Ascending aorta (tissue), 2 donors: ENCODE measurements at regions of chr20 and their contacts with region 1.

Region 1: DNA sequence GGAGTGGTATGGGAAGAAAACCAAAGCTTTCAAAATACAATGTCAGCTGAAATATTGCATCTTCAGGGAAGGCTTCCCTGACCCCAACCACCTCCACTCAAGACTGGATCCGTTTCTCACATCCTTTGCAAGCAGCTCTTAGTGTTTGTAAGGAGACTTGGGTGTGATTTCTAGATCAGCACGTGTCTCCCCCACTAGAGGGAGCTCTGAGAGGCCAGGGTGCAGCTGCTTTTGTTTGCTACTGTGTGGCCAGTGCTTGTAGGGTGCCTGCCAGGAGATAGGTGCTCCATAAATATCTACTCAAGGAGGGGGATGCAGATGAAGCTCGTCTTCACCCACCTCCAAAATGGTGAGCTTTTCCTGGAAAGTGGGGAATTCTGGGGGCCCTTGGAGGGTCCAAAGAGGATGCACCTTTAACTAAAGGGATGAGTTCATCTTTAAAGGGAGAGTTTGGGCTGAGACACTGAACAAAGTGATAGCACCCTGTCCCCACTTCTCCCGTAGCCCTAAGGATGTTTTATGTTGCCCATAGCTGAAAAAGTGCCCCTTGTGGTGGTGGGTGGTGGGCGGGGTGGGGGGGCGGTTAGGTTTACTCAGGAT is 52.6 kb upstream of the MAFB start:
- DNase-seq: no peak
- H3K4me3 ChIP-seq: no peak overlapping the region
- H3K27ac ChIP-seq: no peak overlapping the region
- H3K4me1 ChIP-seq: no peaks in the 10 kb centered on the region
- H3K27me3 ChIP-seq: no peaks in the 10 kb centered on the region
- CTCF ChIP-seq: peak in 2 of 3 experiments; percentile 35 to 62

Region 2: GRCh38 chr20:40945754-40946450 is 204.3 kb after region 1 on chr20:
- intact Hi-C with region 1: loop called (anchors 1 kb)
- DNase-seq: no peak
- H3K4me3 ChIP-seq: no peak overlapping the region
- H3K27ac ChIP-seq: no peak overlapping the region
- H3K4me1 ChIP-seq: no peaks in the 10 kb centered on the region
- H3K27me3 ChIP-seq: no peaks in the 10 kb centered on the region
- CTCF ChIP-seq: peak; percentile 51 to 74 (median 52)